Aorta (tissue), 5 donors: ENCODE measurements at regions of chr9 and their contacts with region 1.

Region 1: DNA sequence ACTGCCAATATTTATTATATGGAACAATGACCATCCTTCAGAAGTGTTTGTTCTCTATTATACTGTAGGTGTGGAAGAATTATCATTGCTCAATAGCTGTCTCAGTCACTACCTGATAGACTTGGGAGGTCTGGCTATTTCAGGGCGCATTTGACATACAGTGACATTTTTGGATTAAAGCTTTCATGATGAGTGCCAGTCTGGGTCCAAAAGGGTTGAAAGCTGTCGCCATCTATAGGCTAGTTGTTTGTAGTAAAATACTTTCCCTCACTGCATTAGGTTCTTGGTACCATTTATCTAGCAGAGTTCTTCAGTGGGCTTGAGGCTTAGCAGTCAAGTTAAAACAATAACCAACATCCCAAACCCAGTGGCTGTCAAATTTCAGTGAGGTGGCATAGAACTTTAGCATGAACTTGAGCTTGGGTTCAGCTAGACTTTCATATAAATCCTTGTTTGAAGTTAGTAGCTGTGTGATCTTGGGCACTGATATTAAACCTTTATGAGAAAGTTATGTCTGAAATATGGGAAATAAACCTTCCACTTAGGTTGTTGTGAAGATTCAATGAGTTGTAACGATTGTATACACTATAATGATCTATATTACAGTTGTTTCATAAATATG is 110.5 kb upstream of the CDKN2B start:
- DNase-seq: no peak
- ATAC-seq: peak; percentile 52
- H3K4me3 ChIP-seq: no peak overlapping the region
- H3K27ac ChIP-seq: no peak overlapping the region
- H3K4me1 ChIP-seq: no peaks in the 10 kb centered on the region
- H3K27me3 ChIP-seq: no peaks in the 10 kb centered on the region

Region 2: GRCh38 chr9:21933865-21934264 is 185.8 kb before region 1 on chr9:
- intact Hi-C with region 1: no loop called
- DNase-seq: no peak
- ATAC-seq: no peak
- H3K4me3 ChIP-seq: no peak overlapping the region
- H3K27ac ChIP-seq: no peak overlapping the region
- H3K4me1 ChIP-seq: no peaks in the 10 kb centered on the region
- H3K27me3 ChIP-seq: no peaks in the 10 kb centered on the region

Region 3: DNA sequence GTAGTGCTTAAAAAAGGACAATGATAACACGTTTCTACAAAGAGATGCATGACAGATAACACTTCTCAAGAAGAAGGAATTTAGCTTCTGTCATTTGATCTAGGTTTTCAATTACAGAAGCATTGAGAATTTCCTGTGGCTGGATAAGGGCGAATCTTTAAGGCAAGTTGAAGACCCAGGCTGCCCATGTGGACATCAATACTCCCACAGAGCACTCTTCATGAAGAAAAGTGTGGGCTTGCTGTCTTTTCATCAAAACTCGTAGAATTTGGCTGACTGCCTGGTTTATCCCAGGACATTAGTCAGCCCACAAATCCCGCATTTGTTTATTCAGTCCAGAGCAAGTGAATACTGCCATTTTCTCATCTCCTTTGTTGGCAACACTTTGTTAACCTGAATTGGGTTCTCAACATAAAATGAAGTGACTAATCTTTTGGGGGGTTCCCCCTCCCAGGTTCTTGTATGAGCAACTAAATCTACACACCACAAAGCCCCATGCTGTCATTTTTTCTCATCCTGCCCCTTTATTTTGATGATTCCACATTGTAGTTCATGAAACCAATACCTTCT is 67.2 kb before region 1 on chr9:
- intact Hi-C with region 1: loop called in 1 of 2 experiments (anchors 5 kb)
- DNase-seq: no peak
- ATAC-seq: no peak
- H3K4me3 ChIP-seq: no peak overlapping the region
- H3K27ac ChIP-seq: no peak overlapping the region
- H3K4me1 ChIP-seq: no peaks in the 10 kb centered on the region
- H3K27me3 ChIP-seq: no peaks in the 10 kb centered on the region